ENCODE measurements at regions of chr1 and their contacts with region 1.

Region 1: DNA sequence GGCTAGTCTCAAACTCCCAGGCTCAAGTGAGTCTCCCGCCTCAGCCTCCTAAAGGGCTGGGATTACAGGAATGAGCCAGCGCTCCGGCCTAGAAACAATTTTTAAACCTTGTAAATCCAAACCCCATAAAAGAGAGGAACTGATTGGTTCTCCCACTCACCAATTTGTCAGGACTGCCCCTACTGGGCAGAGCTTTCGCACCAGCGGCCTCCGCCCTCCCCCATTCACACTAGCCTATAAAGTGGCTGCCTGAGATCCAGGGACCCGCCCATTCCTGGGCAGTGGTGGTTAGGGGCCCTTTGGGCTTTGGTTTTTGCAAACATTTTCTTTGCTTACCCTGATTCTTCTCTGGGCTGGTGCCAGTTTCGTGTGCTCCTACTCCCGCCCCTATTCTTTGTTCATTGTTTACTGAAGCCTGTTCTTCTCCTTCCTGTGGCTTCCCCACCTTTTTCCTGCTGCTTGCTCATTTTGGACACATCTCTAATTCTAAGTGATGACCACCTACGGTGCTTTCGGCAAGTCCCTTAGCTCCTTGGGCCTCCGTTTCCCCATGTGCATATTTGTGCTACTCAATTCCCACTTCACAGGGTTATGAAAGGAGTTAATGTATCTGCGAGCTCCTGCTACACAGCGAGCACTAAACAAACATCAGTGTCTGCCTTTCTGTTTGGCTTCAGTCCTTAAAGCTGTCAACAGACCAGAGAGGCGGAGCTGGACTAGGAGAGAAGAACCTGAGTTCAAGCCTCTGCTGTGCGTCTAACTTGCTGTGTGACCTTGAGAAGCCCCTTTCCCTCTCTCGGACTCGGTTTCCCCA is 39.8 kb upstream of the CLIC4 start:
- DNase-seq: peak; percentile 96

Region 2: DNA sequence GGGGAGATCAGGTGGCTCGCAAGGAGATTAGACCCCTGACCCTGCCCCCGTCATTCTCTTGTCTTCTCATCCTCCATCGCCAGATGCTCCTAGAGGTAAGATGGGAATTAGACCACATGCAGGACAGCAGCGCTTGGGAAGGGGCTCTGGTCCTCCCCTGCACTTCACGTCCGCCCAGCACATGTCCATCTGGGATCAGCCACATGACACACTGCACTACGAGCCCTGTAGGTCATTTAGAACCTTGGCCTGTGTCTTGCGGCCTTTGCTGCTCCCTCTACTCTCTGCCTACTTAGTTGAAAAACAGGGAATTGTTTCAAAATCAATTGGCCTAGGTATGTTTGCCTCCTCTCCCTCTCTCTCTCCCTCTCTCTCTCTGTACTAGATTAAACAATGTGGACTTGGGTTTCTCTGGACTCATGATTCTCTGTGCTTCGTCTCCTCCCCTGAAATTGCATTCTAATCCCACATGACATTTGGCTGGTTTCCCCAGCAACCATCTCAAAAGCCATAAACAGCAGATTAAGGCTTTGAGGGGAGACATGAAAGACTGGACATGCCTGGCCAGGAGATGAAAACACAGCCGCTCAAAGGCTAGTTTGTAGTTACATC is 153.4 kb before region 1 on chr1:
- CTCF ChIA-PET with region 1: no interaction called
- POLR2A ChIA-PET with region 1: no interaction called
- DNase-seq: no peak

Region 3: GRCh38 chr1:24717867-24718650 is 12.6 kb after region 1 on chr1:
- CTCF ChIA-PET with region 1: interaction called, 10 read pairs
- POLR2A ChIA-PET with region 1: interaction called, 7 read pairs
- DNase-seq: no peak

Region 4: GRCh38 chr1:24724345-24725208 is 19.1 kb after region 1 on chr1:
- CTCF ChIA-PET with region 1: no interaction called
- POLR2A ChIA-PET with region 1: interaction called, 11 read pairs
- DNase-seq: peak; percentile 70

Measured in HEK293T (cell line).